ENCODE measurements at regions of chr12 and their contacts with region 1.

Region 1: GRCh38 chr12:26017484-26018206 is 59.2 kb downstream of the RASSF8 start:
- DNase-seq: peak; percentile 61
- H3K4me3 ChIP-seq: no peak overlapping the region
- H3K27ac ChIP-seq: peak overlapping the region; percentile 1; the same call in 1 of the 2 replicates
- H3K4me1 ChIP-seq: peaks cover 50% of the 10 kb centered on the region
- H3K27me3 ChIP-seq: no peaks in the 10 kb centered on the region

Region 2: GRCh38 chr12:25436203-25437030 is 581.2 kb before region 1 on chr12:
- in situ Hi-C with region 1: loop called (anchors 25 kb)
- DNase-seq: peak; percentile 88
- H3K4me3 ChIP-seq: peak overlapping the region; percentile 68
- H3K27ac ChIP-seq: no peak overlapping the region
- H3K4me1 ChIP-seq: peaks cover 13% of the 10 kb centered on the region
- H3K27me3 ChIP-seq: no peaks in the 10 kb centered on the region